PC-9 (cell line): ENCODE measurements at regions of chr20 and their contacts with region 1.

Region 1: DNA sequence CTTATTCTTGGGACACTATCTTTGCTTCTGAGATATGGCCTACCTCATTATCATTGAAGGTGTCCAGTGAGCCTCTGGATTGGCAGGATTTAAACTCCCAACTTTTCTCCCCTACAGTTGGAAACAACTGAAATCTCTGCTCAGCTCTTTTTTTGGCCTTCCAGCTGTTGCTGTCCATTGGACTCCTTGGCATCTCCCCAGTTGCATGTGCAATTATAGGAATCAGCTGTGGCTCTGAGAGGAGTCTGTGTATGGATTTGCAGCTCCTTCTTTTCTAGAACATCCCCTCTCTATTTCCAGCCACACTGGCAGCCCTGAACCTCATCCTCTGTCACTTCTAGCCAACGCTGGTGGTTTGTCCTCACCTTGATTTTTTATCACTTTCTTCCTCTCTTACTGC is 21.2 kb downstream of the RAB22A start:
- DNase-seq: no peak
- H3K4me3 ChIP-seq: no peak overlapping the region
- H3K27ac ChIP-seq: no peak overlapping the region
- H3K4me1 ChIP-seq: no peaks in the 10 kb centered on the region
- H3K27me3 ChIP-seq: no peaks in the 10 kb centered on the region
- CTCF ChIP-seq: no peak

Region 2: DNA sequence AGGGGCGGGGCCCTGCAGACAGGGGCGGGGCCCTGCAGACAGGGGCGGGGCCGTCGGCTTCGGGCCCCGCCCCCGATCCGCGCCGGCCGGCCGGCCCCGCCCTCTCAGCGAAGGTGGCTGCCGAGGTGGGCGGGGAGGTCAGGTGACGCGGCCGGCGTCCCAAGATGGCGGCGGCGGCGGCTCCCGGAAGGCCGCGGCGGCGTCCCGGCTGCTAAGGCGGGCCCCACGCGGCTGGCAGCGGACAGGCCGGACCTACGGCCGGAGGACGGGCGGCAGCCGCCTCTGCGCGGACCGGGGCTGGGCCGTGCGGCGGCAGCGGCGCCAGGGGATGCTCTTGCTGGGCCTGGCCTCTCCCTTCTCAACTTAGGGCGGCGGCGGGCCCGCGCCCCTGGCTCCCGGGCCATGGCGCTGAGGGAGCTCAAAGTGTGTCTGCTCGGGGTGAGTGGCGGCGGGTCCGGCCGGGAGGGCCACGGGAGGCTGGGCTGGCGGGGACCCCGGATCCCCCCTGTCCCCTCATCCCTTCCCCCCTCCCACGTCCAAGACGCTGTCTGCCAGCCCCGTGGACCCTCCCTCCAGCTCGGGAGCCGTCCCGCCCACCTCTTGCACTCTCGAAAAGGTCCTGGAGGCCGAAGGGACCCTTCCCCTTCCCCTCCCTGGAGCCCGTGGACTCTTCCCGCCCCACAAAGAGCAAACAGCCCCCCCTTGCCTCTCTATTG is 21.0 kb before region 1 on chr20 and contains the start of gene RAB22A:
- CTCF ChIA-PET with region 1: no interaction called
- POLR2A ChIA-PET with region 1: interaction called, 15 read pairs
- intact Hi-C with region 1: no loop called
- DNase-seq: peak; percentile 55 to 83
- H3K4me3 ChIP-seq: peak within 1 kb of the TSS; percentile 94
- H3K27ac ChIP-seq: peak within 1 kb of the TSS; percentile 49
- H3K4me1 ChIP-seq: peaks cover 13% of the 10 kb centered on the region
- H3K27me3 ChIP-seq: no peaks in the 10 kb centered on the region
- CTCF ChIP-seq: no peak
- total RNA-seq, gene RAB22A: 22.6 and 28.9 TPM in 2 replicates

Region 3: DNA sequence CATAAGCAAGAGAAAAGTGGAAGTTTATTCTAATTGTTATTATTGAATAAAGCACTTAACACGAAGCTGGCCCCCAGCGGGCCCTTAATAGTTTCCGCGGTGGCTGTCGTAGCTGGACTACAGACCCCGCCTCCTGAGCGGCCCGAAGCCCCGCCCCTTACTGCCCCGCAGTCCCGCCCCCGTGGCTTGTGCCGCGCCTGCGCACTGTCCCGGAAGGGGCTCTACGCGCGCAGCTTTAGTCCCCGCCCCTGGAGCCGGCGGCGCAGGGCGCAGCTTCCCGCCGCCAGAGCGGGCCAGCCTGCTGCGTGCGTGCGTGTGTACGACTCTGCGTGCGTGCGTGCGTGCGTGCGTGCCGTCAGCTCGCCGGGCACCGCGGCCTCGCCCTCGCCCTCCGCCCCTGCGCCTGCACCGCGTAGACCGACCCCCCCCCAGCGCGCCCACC is 58.2 kb after region 1 on chr20 and contains the start of gene VAPB:
- CTCF ChIA-PET with region 1: no interaction called
- POLR2A ChIA-PET with region 1: interaction called, 25 read pairs
- intact Hi-C with region 1: no loop called
- DNase-seq: peak; percentile 85 to 98
- H3K4me3 ChIP-seq: peak within 1 kb of the TSS; percentile 61
- H3K27ac ChIP-seq: peak within 1 kb of the TSS; percentile 67
- H3K4me1 ChIP-seq: peaks cover 18% of the 10 kb centered on the region
- H3K27me3 ChIP-seq: no peaks in the 10 kb centered on the region
- CTCF ChIP-seq: no peak
- total RNA-seq, gene VAPB: 73.0 and 80.6 TPM in 2 replicates

Region 4: DNA sequence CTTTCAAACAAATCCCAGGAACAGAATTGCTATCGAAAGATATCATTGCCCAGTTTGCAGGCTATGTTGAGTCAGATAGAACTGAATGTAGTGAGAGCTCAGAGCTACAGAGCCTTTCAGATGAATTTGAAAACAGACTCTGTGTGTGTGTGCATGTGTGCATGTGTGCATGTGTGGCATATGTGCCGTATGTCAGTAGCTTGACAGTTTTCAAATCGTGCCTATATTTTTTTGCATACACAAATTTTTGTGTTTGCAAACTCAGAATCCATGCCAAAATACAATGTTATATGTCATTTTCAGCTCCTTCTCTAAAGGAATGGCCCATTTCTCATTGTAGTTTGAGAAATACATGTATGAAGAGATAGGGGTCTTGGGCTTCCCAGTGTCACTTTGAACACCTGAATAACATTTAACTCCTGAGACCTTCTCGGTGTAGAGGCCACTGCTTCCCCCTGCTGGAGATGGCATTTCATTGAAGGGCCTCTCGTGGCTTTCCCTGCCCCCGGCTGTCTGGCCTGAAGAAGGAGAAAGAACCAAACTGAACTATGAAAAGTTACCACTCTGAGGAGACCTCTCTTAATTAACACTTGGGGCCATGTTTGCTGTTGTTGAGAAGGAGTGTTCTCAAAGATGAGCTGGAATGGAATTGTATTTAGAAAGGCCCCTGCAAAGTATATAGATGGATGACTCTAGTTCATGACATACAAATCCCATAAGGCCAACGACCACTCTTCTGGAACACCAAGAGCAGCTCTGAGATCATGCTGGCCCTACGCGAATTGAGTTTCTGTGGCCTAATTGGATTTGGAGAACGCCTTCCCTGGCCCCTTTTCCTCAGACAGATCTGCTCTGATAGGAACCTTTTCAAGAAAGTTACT is 117.1 kb after region 1 on chr20:
- CTCF ChIA-PET with region 1: no interaction called
- POLR2A ChIA-PET with region 1: no interaction called
- intact Hi-C with region 1: loop called (anchors 10 kb)
- DNase-seq: peak in 1 of 2 experiments; percentile 56
- H3K4me3 ChIP-seq: no peak overlapping the region
- H3K27ac ChIP-seq: no peak overlapping the region
- H3K4me1 ChIP-seq: no peaks in the 10 kb centered on the region
- H3K27me3 ChIP-seq: no peaks in the 10 kb centered on the region
- CTCF ChIP-seq: peak; percentile 75

Region 5: DNA sequence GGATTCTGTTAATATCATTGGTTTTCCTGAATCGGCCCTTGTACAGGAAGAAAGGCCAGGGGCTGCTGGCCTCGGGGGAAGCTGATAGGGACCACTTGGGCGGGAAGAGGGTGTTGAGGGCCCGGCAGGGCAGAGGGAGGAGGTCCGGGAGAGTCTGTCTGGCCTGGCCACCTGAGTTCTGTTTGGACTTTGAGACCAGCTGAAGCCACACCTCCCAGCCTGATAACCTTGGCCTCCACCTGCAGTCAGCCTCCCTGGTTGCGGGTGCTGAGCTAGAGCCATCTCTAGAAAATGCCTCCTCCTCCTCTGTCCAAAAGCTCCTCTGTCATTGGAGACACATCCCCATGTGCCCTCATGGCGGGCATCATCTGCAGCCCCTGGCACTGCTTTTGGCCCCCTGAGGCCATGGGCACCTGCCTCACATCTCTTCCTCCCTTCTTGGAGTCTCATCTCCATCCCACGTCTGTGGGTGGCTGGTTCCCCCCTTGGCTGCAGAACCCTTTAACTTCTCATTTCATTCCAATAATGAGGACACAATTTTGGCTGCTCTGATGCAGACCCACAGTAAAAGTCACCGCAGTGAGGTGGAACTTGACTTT is 167.9 kb after region 1 on chr20:
- CTCF ChIA-PET with region 1: no interaction called
- POLR2A ChIA-PET with region 1: no interaction called
- intact Hi-C with region 1: no loop called
- DNase-seq: no peak
- H3K4me3 ChIP-seq: no peak overlapping the region
- H3K27ac ChIP-seq: no peak overlapping the region
- H3K4me1 ChIP-seq: no peaks in the 10 kb centered on the region
- H3K27me3 ChIP-seq: no peaks in the 10 kb centered on the region
- CTCF ChIP-seq: no peak